A673 (cell line): ENCODE measurements at regions of chr9 and their contacts with region 1.

Region 1: DNA sequence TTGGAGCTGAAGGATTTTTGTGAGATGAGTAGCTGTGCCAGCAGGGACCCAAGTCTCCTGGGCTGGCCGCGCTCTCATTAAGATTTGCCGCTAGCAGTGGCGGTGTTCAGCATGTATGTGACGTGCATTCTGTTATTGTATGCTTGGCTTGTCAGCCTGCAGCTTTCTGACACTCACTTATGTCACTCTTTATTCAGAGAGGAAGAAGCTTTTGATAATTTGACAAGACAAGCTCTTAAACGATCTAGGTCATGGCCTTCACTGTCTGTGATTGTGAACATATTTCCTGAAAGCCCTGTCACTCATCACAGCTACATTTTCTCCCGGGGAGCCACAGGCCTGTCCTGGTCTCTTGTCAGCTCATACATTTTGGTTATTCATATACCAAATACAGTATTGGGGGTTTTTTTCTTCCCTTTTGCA is 98.2 kb upstream of the GRHPR start:
- DNase-seq: peak; percentile 96
- H3K4me3 ChIP-seq: peak overlapping the region; percentile 5
- H3K27ac ChIP-seq: peak overlapping the region; percentile 66
- H3K4me1 ChIP-seq: peaks cover 63% of the 10 kb centered on the region
- H3K27me3 ChIP-seq: no peaks in the 10 kb centered on the region
- CTCF ChIP-seq: no peak

Region 2: GRCh38 chr9:37293664-37294524 is 30.4 kb before region 1 on chr9:
- CTCF ChIA-PET with region 1: no interaction called
- POLR2A ChIA-PET with region 1: no interaction called
- intact Hi-C with region 1: loop called (anchors 2 kb)
- DNase-seq: peak; percentile 96
- H3K4me3 ChIP-seq: no peak overlapping the region
- H3K27ac ChIP-seq: peak overlapping the region; percentile 80
- H3K4me1 ChIP-seq: peaks cover 67% of the 10 kb centered on the region
- H3K27me3 ChIP-seq: no peaks in the 10 kb centered on the region
- CTCF ChIP-seq: no peak

Region 3: DNA sequence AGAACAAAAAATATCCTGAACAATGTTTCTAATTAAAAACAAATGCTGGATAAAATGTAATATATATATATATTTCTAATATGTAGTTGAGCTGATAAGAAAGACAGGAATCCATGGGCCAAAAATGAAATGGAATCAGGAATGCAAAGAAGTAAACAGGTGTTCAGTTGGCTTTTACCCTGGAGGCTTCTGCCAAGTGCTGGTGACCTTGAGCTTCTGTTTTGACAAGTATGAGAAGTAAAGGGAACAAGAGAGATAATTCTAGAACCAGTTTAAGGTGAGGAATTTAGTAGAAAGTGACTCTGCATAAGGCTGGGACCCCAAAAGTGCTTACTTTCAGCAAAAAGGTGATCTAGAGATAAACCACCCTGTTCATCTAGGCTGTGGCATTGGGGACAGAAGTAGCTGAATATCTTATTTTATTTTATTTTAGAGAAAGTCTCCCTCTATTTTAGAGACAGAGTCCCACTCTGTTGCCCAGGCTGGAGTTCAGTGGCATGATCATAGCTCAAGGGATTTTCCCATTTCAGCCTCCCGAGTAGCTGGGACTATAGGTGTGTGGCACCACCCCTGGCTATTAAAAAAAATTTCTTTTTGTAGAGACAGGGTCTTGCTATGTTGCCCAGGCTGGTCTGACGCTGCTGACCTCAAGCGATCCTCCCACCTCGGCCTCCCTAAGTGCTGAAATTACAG is 503.3 kb after region 1 on chr9:
- CTCF ChIA-PET with region 1: no interaction called
- POLR2A ChIA-PET with region 1: no interaction called
- intact Hi-C with region 1: no loop called
- DNase-seq: no peak
- H3K4me3 ChIP-seq: no peak overlapping the region
- H3K27ac ChIP-seq: no peak overlapping the region
- H3K4me1 ChIP-seq: no peaks in the 10 kb centered on the region
- H3K27me3 ChIP-seq: no peaks in the 10 kb centered on the region
- CTCF ChIP-seq: no peak